Common myeloid progenitor, CD34-positive (primary cell): ENCODE measurements at regions of chr6 and their contacts with region 1.

Region 1: DNA sequence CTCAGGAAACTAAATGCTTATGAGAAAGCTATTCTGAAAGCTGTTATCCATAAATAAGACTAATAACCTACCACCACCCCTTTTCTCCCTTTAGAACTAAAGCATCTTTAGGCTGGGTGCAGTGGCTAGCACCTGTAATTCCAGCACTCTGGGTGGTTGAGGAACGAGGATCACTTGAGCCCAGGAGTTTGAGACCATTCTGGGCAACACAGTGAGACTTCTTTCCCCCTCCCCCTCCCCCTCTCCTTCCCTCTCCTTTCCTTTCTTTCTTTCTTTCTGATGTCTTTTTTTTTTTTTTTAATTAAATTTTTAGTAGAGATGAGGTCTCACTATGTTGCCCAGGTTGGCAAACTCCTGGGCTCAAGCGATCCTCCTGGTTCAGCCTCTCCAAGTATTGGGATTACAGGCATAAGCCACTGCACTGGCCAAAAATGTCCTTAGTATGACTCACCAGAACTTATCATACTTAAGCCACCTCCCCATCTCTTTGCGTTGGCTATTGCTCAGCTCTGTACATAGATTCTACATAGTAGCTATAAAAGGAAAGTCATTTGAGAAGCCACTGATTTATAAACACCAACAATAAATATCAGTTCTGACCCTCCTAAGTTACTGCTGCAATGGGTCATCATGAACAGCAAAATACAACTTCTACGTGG is 54.8 kb upstream of the SPDEF start:
- DNase-seq: peak in 2 of 3 donors; percentile 23 to 32
- H3K4me3 ChIP-seq: no peak overlapping the region
- H3K27ac ChIP-seq: no peak overlapping the region
- H3K4me1 ChIP-seq: peaks cover 0 to 3% (median under 1%) of the 10 kb centered on the region in 4 experiments
- H3K27me3 ChIP-seq: no peaks in the 10 kb centered on the region

Region 2: DNA sequence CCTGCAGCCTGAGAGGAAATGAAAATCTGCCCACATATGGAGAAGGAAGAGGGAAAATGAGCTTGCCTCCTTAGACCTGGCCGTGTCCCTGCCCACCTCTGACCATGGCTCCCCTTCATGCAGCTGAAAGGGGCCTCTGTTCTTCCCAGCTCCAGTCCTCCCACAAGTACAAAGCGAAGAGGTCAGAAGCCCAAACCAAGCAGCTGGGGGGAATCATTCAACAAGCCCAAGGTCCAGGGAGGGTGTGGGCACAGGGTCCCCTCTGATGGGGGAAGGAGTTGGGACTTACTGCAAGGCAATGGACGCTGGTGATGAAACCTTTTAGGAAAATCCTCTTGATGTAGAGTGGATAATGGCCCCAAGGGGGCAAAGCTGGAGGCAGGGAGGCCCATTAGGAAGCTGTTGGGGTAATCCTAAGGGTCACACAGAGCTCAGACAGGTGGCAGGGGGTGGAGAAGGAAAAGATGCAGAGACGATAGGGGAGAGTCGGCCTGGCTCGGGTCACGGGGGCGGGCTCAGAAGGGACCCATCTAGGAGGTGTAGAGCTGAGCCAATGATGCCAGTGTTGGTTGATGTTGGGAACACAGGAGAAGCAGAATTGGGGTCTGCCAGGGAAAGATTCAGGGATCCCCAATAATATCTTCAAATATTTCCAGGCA is 449.0 kb before region 1 on chr6:
- CTCF ChIA-PET with region 1: interaction called, 17 read pairs
- POLR2A ChIA-PET with region 1: no interaction called
- DNase-seq: no peak
- H3K4me3 ChIP-seq: no peak overlapping the region
- H3K27ac ChIP-seq: no peak overlapping the region
- H3K4me1 ChIP-seq: no peaks in the 10 kb centered on the region
- H3K27me3 ChIP-seq: peaks cover 0 to 12% (median 2%) of the 10 kb centered on the region in 5 experiments

Region 3: DNA sequence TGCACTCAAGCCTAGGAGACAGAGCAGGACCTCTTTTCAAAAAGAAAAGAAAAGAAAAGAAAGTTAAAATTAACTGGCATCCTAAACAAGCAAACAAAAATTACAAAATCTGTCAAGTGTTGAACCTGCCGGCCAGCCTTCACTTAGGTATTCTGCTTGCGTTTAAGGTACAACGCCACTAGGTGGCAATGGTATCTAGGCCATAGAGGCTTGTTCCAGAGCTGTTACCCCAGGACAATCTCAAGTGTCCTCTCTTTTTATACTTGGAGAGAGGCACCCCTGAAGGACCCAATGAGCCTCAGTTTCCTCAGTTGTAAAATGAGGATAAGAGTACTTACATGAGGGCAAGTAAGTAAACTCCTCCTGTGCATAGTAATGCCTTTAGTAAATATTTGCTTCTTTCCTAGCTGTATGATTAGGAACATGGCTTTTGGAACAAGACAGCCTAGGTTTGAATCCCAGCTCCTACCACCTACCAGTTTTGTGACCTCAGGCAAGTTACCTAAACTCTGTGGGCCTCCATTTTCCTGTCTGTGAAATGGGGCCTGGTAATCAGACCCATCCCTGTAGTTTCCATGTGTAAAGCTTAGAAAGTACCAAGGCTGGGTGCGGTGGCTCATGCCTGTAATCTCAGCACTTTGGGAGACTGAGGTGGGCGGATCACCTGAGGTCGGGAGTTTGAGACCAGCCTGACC is 150.9 kb before region 1 on chr6:
- CTCF ChIA-PET with region 1: interaction called, 70 read pairs
- POLR2A ChIA-PET with region 1: no interaction called
- DNase-seq: peak; percentile 61 to 85 (median 78)
- H3K4me3 ChIP-seq: no peak overlapping the region
- H3K27ac ChIP-seq: no peak overlapping the region
- H3K4me1 ChIP-seq: peaks cover 0 to 1% (median under 1%) of the 10 kb centered on the region in 4 experiments
- H3K27me3 ChIP-seq: peaks cover 0 to 16% (median 4%) of the 10 kb centered on the region in 5 experiments

Region 4: DNA sequence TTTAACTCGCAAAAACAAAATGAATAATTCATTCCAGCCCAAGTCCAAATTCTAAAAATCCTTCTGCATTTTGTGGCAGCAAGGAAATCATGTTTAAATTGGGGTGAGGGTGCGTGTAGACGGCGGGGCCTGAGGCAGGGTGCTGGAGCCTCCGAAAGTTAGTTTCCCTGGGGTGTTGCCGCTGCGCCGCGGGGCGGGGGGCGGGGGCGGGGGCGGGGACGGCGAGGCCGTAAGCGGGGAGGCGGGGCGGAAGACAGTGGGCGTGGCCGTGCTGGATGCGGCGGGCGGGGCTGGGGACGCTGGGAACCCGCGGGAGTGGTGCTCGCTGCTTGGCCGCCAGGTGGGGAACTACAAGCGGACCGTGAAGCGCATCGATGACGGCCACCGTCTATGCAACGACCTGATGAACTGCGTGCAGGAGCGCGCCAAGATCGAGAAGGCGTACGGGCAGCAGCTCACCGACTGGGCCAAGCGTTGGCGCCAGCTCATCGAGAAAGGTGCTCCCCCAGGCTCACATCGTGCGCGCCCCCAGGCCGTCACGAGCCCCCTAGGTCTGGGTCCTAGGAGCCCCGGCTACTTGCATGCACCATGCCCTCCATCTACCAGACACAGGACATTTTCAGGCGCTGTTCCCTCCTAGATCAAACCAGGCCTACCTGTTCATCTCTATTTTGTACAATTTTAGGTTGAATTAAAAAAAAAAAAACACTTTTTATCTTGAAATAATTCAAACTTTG is 83.8 kb before region 1 on chr6:
- CTCF ChIA-PET with region 1: interaction called, 20 read pairs
- POLR2A ChIA-PET with region 1: no interaction called
- DNase-seq: peak; percentile 92 to 95 (median 95)
- H3K4me3 ChIP-seq: peak overlapping the region in 3 of 7 experiments; percentile 40 to 67 (median 52)
- H3K27ac ChIP-seq: peak overlapping the region in 1 of 2 experiments; percentile 51
- H3K4me1 ChIP-seq: peaks cover 0 to 15% (median 8%) of the 10 kb centered on the region in 4 experiments
- H3K27me3 ChIP-seq: no peaks in the 10 kb centered on the region

Region 5: GRCh38 chr6:34583461-34583860 is 27.5 kb before region 1 on chr6:
- CTCF ChIA-PET with region 1: interaction called, 37 read pairs
- POLR2A ChIA-PET with region 1: no interaction called
- DNase-seq: peak in 1 of 3 donors; percentile 13
- H3K4me3 ChIP-seq: no peak overlapping the region
- H3K27ac ChIP-seq: no peak overlapping the region
- H3K4me1 ChIP-seq: no peaks in the 10 kb centered on the region
- H3K27me3 ChIP-seq: no peaks in the 10 kb centered on the region

Region 6: DNA sequence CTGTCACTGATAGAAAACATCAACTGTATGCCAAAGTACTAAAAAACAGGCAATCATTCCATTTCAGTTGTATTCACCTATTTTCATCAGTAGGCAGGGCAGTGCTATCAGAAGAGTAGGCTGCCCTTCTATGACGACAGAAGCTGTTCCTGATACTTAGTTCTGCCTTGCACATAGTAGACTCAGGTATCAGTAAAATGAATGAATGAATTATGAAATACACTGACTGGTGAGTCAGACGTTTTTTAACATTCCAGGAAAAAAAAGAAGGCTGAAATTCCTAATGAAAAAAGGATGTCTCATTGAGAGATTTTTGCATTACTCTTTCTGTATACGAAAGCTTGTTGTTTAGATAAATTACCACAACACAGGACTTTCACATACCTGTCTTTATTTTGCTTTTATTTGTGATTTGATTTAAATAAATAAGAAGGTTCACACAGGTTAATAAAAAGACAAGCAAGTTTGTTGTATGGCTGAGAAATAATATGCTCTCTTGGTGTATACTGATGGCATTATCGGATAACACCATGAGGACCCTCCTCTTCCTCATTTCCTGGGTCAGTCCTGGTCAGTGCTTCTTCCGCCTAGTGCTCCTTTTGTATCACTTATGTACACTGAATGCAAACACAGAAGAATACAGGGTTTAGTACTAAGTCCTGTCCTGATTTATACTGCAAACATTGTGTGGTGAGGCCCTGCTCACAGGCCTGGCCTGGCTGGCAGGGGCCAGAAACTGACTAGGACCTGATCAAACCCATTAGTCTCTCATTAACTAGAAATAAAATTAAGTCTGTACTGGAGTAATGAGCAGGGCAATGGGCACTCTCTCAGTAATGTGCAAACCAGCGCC is 15.4 kb before region 1 on chr6:
- CTCF ChIA-PET with region 1: interaction called, 20 read pairs
- POLR2A ChIA-PET with region 1: interaction called, 4 read pairs
- DNase-seq: no peak
- H3K4me3 ChIP-seq: no peak overlapping the region
- H3K27ac ChIP-seq: no peak overlapping the region
- H3K4me1 ChIP-seq: peaks cover 0 to 3% (median 0%) of the 10 kb centered on the region in 4 experiments
- H3K27me3 ChIP-seq: no peaks in the 10 kb centered on the region